Heart right ventricle (tissue), 16 donors: ENCODE measurements at regions of chrX and their contacts with region 1.

Region 1: GRCh38 chrX:110317820-110318658 is at the start of gene AMMECR1:
- DNase-seq: peak; percentile 72 to 79
- ATAC-seq: peak; percentile 95 to 98 (median 96)
- H3K4me3 ChIP-seq: peak within 1 kb of the TSS; percentile 53 to 91 (median 78)
- H3K27ac ChIP-seq: peak within 1 kb of the TSS; percentile 46 to 89 (median 83)
- H3K4me1 ChIP-seq: peaks cover 0 to 18% (median 3%) of the 10 kb centered on the region in 9 donors
- H3K27me3 ChIP-seq: peaks cover 0 to 53% (median 0%) of the 10 kb centered on the region in 7 donors
- CTCF ChIP-seq: no peak
- total RNA-seq, gene AMMECR1: 0.59 to 1.8 (median 1.1) TPM

Region 2: GRCh38 chrX:110167952-110168451 is 150.0 kb before region 1 on chrX:
- intact Hi-C with region 1: loop called in 4 of 10 experiments (anchors 5 to 10 kb)
- DNase-seq: peak in 1 of 2 donors; percentile 14
- ATAC-seq: peak in 5 of 8 donors; percentile 42 to 63 (median 52)
- H3K4me3 ChIP-seq: no peak overlapping the region
- H3K27ac ChIP-seq: no peak overlapping the region
- H3K4me1 ChIP-seq: peaks cover 0 to 5% (median 0%) of the 10 kb centered on the region in 9 donors
- H3K27me3 ChIP-seq: peaks cover 0 to 6% (median 0%) of the 10 kb centered on the region in 7 donors
- CTCF ChIP-seq: peak in 8 of 9 donors; percentile 26 to 68 (median 52)

Region 3: DNA sequence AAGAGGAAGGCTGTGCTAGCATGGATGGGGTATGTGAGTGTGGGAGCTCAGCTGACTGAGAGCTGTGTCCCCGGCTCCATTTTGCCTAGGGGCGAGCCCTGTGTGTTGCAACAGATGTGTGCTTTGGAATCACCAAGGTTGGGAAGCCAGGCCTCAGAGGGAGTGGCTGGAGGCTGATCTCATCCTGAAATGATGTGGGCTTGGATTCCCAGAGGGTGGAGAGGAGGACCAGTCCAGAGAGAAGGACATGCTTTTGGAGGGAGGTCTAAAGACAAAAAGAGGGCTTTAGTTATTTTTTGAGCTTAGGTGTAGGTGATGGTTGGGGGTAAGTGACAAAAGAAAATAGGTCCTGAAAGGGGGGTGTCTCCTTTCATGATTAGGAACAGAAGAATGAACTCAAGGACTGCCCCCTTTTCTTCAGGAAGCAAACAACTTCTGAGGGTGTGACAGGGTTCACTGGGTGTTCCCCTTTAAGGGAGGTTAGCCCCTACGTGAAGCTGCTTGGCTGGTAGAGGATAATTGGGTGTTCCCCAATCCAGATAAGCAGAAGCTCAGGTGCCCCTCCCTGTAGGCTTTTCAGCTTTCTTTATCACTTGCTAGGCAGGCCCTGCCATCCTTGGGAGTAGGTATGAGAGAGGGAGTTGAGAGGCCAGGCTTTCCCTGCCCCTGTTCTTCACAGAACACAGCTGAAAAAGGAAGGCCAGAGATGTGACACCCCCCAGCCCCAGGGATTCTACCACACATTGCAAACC is 84.6 kb after region 1 on chrX:
- intact Hi-C with region 1: loop called in 1 of 10 experiments (anchors 5 kb)
- DNase-seq: peak in 1 of 2 donors; percentile 15
- ATAC-seq: peak in 7 of 8 donors; percentile 45 to 90 (median 80)
- H3K4me3 ChIP-seq: no peak overlapping the region
- H3K27ac ChIP-seq: no peak overlapping the region
- H3K4me1 ChIP-seq: peaks cover 0 to 4% (median 0%) of the 10 kb centered on the region in 9 donors
- H3K27me3 ChIP-seq: peaks cover 0 to 43% (median 0%) of the 10 kb centered on the region in 7 donors
- CTCF ChIP-seq: no peak